Activated T-helper 2 cell treated with anti-CD3 and anti-CD28 coated beads, Interferon-gamma antibody, Interleukin-2, Interleukin-4, amounts not matched to agents 10 μg/mL and 5 μg/mL and 100 μg/mL, durations not matched to agents 14 hours and 24 hours and 36 hours (primary cell): ENCODE measurements at regions of chr12 and their contacts with region 1.

Region 1: DNA sequence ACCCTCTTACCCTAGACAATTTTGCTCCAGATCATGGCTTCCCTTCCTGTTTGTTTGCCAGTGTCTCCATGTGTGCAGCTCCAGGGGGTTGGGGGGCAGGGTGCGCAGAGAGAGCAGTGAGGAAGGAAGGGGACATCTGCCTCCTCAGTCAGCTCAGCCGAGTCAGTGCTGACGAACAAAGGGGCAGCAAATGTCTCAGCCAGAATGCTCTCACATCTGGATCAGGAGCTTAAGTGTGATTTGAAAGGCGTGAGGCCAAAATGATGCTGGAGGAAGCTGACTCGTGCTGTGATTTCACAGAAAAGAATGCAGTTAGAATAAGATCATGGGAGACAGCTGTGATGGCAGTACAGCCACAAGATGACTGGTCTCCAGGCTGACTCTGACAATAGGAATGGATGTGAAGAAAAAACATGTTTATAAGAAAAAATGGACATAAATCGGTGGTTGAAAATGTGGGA is 27.1 kb upstream of the CDK17 start:
- DNase-seq: no peak
- H3K4me3 Mint-ChIP-seq: peak overlapping the region; percentile 58
- H3K27ac Mint-ChIP-seq: peak overlapping the region; percentile 88
- H3K4me1 Mint-ChIP-seq: peaks cover 52% of the 10 kb centered on the region
- H3K27me3 Mint-ChIP-seq: no peaks in the 10 kb centered on the region

Region 2: GRCh38 chr12:96271469-96272199 is 155.7 kb before region 1 on chr12:
- intact Hi-C with region 1: no loop called
- DNase-seq: no peak
- H3K4me3 Mint-ChIP-seq: no peak overlapping the region
- H3K27ac Mint-ChIP-seq: peak overlapping the region; percentile 1
- H3K4me1 Mint-ChIP-seq: peaks cover 13% of the 10 kb centered on the region
- H3K27me3 Mint-ChIP-seq: no peaks in the 10 kb centered on the region

Region 3: DNA sequence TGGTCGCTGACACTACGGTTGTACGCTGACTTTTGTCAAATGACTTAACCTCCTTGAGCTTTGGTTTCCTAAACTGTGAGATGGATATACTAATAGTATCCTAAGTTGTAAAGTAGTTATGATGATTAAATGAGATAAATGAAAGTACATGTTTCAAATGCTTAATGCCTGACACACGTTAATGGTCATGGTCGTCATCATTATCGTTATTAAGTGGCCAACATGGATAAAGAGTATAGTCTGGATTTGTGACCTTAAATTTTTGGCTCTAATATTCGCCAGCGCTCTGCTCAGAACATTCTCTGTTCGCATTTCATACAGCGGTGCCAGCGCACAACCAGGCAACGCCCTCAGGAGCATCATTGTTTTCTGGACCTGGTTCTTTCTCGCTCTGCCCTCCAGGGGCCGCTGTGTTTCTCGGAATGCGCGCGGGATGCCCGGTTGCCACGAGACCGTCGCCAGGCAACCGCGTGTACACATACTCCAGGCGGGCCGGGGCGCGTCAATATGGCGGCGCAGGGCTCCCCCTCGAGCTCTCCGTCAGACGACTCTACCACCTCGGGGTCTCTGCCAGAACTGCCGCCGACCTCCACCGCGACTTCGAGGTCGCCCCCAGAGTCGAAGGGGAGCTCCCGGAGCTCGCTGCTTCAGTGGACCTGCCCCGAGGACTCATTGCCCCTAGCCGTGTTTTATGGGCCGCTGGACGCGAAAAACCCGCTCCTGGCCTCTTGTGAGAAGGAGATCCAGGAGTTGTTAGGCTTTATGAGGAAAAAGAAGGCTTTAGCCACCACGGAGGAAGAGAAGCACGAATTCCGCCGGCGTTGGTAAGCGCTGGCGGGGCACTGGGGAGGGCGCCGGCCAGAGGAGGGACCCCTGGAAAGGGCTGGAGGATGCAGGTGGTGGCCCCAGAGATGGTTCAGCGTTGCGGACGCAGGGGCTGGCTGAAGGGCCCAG is 62.1 kb after region 1 on chr12 and contains the start of gene CFAP54:
- intact Hi-C with region 1: loop called (anchors 1 kb)
- DNase-seq: peak; percentile 92
- H3K4me3 Mint-ChIP-seq: peak within 1 kb of the TSS; percentile 84
- H3K27ac Mint-ChIP-seq: peak within 1 kb of the TSS; percentile 48
- H3K4me1 Mint-ChIP-seq: peaks cover 31% of the 10 kb centered on the region
- H3K27me3 Mint-ChIP-seq: peaks cover 25% of the 10 kb centered on the region
- total RNA-seq, gene CFAP54: 0.14 and 0.23 TPM in 2 replicates